Activated CD4-positive, alpha-beta T cell treated with anti-CD3 and anti-CD28 coated beads, Interleukin-2, amount 10 ng/mL, durations not matched to agents 24 days and 14 days (primary cell): ENCODE measurements at regions of chr1 and their contacts with region 1.

Region 1: DNA sequence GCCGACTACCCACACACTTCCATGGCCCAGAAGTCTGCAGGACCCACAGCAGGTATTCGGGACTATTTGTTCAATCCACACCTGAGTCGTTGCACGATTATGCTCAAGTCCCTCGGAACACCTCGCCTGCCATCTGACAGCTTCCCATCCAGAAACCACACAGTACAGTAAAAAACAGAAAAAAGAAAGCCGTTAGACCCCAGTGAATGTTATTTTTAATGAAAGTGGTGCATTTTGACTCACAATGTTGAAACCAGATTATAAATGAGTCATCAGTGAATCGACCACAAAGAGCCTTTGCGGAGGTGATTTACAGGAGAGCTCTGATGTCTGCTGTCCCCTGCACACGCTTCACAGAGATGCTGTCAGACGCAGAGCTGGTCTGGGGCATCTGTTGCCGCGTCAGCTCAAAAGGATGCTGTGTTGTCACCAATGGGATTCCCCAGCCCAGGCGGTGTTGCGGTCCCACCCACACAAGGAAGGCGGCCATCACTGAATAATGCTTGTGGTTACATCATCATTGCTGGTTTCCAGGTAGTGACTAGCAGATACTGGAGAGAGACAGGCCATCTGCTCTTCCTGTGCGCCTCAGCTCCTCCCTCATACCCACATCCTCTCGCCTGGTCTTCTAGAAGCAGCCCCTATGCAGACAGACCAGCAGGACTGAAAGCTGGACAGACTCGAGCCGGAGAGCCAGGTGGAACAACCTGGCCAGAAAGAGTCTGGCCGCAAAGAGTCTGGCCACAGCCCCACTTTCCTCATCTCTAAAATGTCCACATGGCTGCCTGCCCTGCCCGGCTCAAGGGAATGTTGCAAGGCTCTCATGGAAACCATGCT is 116.8 kb downstream of the TOMM20 start:
- DNase-seq: peak; percentile 98
- H3K4me3 Mint-ChIP-seq: peak overlapping the region; percentile 76
- H3K27ac Mint-ChIP-seq: peak overlapping the region; percentile 98
- H3K4me1 Mint-ChIP-seq: peaks cover 79% of the 10 kb centered on the region
- H3K27me3 Mint-ChIP-seq: peaks cover 5% of the 10 kb centered on the region

Region 2: GRCh38 chr1:234499119-234499942 is 512.5 kb before region 1 on chr1:
- intact Hi-C with region 1: loop called (anchors 1 kb)
- DNase-seq: peak; percentile 96
- H3K4me3 Mint-ChIP-seq: peak overlapping the region; percentile 50
- H3K27ac Mint-ChIP-seq: peak overlapping the region; percentile 85
- H3K4me1 Mint-ChIP-seq: peaks cover 70% of the 10 kb centered on the region
- H3K27me3 Mint-ChIP-seq: no peaks in the 10 kb centered on the region

Region 3: DNA sequence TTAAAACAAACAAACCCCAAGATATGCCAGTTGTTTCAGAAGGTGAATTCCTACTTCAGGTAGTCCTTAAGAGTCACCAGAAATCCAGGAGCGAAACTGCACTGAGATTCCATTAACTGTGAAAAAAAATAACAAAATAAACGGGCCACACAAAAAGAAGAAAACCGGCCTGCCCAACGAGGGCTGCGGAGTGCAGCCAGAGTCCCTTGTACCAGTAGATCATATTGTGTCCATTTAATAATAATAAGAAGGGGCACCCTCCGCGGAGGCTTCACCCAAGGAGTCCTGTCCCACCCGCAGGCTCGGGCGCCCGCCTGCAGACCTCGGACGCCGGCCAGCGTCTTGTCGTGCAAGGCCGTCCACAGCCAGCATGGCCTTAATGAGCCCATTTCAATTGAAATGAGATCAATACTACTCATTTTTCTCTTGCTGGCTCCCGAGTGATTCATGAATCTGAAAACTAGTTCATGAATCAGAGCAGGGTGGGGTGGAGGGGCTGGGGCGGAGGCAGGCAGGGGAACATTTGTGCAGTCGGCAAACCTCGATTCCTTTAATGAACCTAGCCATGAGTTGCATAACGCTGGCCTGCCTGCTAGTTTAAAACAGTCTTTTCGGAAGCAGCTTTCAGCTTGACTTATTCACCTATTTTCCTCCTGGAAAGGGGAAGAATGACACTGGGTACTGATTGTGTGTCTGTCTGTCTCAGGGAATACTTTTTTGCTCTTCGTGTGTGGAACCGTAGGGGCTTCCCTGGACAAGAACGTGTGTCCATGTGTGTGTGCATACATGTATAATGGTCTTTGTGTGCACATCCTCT is 288.7 kb before region 1 on chr1:
- intact Hi-C with region 1: loop called (anchors 1 kb)
- DNase-seq: peak; percentile 66
- H3K4me3 Mint-ChIP-seq: peak overlapping the region; percentile 76
- H3K27ac Mint-ChIP-seq: peak overlapping the region; percentile 96
- H3K4me1 Mint-ChIP-seq: peaks cover 82% of the 10 kb centered on the region
- H3K27me3 Mint-ChIP-seq: peaks cover 2% of the 10 kb centered on the region

Region 4: GRCh38 chr1:234842726-234843641 is 168.8 kb before region 1 on chr1:
- intact Hi-C with region 1: loop called (anchors 1 kb)
- DNase-seq: peak; percentile 89
- H3K4me3 Mint-ChIP-seq: peak overlapping the region; percentile 74
- H3K27ac Mint-ChIP-seq: peak overlapping the region; percentile 94
- H3K4me1 Mint-ChIP-seq: peaks cover 84% of the 10 kb centered on the region
- H3K27me3 Mint-ChIP-seq: no peaks in the 10 kb centered on the region

Region 5: DNA sequence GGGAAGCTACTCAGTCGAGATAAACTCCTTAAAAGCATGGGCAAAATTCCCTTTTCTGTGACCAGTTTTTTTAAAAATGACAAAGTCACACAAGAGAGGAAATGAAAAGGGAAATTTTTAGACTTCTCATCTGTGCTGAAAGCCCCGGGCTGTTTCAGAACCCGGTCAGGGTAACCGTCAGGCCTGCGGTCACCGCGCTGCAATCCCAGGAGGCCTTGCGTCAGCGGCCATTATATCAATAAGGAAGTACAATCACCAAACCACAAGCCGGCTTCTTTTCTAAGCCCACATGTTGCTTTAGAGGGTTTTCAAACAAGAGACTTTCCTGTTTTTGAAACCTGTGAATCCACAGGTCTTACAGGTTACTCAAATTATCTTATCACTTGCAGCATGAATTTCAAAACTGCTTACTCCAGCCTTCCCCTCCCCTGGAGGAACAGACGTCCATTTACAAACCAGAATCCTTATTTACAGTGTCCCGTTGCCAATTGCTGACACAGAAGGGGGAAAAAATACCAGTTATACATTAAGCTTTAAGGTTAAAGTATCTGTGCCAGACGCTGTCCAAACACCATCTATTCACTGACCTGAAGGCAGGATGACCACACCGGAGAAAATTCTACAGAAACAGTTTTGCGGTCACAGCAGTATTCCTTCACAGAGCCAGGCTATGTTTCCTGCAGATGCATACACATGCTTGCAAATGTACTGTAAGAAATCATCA is 48.5 kb before region 1 on chr1:
- intact Hi-C with region 1: loop called (anchors 1 kb)
- DNase-seq: peak; percentile 96
- H3K4me3 Mint-ChIP-seq: peak overlapping the region; percentile 79
- H3K27ac Mint-ChIP-seq: peak overlapping the region; percentile 97
- H3K4me1 Mint-ChIP-seq: peaks cover 69% of the 10 kb centered on the region
- H3K27me3 Mint-ChIP-seq: no peaks in the 10 kb centered on the region

Region 6: DNA sequence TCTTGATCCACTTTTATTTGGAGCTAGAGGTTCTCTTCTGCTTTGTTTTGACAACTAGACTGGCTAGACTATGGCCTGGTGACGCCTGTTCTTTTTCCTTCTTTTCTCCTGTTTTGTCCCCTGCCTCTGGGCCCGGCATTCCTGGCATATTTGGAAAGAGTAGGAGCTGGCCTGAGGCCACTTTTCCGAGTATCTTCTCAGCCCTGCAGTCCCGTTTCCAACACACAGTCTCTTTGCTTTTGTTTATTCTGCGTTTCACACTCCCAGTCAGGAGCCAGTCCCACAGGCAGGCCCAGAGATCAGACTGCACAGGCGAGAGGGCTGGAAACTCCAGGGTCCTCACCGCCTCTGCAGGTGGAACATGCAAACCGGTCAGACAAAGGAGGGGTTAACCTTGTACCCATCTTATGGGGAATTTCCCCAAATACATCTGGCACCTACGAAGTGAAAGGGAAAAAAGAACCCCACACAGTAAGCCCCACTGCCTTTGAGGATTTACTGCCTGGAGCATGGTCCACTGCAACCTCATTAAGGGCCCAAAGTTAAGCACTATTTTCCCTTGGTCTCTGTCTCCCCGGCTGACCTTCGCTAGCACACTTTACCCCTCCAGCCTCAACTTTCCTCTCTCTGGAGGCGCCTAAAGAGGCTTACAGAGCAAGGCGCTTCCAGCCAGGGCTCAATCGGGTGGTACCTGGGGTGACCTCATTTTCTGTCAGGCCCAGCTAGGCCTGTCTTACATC is 24.2 kb before region 1 on chr1:
- intact Hi-C with region 1: loop called (anchors 1 kb)
- DNase-seq: peak; percentile 73
- H3K4me3 Mint-ChIP-seq: peak overlapping the region; percentile 66
- H3K27ac Mint-ChIP-seq: peak overlapping the region; percentile 98
- H3K4me1 Mint-ChIP-seq: peaks cover 71% of the 10 kb centered on the region
- H3K27me3 Mint-ChIP-seq: no peaks in the 10 kb centered on the region

Region 7: DNA sequence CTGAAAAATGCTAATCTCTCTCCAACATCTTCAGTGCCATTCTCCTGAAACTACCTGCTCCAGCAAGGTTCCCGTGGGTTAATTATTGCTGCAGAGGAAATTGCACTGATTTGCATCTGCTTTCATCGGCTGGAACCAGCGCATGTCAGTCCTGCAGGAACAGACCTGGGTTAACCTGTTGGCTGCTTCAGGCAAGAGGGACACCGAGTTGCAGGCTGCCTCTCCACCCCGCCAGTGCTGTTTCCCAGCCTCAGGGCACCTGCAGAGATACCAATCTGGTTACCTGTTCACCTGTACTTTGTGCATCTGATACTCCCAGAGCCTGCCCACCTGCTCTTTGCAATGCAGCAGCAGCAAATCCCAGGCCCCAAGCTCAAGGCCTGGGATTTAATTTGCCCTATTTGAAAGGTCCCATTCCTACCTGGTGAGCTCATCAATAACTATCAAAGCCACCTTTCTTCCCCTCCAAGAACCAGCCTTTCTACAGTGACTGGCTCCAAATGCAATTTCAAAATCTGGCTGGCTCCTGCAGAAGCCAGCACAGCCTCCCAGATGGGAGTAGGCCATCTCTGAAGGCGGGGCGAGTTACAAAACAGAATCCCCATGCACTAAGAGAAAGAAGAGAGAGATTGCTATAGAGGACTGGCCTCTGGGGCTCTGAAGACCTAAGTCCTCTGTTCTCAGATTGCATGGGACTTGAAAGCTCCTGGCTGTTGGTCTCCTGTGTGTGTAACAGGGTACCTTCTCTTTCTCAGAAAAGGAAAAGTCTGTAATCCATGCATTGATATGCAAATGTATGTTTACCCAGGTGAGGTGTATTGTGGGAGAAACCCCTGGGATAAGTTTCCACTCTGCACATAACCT is 49.0 kb after region 1 on chr1:
- intact Hi-C with region 1: no loop called
- DNase-seq: no peak
- H3K4me3 Mint-ChIP-seq: no peak overlapping the region
- H3K27ac Mint-ChIP-seq: no peak overlapping the region
- H3K4me1 Mint-ChIP-seq: peaks cover 40% of the 10 kb centered on the region
- H3K27me3 Mint-ChIP-seq: no peaks in the 10 kb centered on the region

Region 8: DNA sequence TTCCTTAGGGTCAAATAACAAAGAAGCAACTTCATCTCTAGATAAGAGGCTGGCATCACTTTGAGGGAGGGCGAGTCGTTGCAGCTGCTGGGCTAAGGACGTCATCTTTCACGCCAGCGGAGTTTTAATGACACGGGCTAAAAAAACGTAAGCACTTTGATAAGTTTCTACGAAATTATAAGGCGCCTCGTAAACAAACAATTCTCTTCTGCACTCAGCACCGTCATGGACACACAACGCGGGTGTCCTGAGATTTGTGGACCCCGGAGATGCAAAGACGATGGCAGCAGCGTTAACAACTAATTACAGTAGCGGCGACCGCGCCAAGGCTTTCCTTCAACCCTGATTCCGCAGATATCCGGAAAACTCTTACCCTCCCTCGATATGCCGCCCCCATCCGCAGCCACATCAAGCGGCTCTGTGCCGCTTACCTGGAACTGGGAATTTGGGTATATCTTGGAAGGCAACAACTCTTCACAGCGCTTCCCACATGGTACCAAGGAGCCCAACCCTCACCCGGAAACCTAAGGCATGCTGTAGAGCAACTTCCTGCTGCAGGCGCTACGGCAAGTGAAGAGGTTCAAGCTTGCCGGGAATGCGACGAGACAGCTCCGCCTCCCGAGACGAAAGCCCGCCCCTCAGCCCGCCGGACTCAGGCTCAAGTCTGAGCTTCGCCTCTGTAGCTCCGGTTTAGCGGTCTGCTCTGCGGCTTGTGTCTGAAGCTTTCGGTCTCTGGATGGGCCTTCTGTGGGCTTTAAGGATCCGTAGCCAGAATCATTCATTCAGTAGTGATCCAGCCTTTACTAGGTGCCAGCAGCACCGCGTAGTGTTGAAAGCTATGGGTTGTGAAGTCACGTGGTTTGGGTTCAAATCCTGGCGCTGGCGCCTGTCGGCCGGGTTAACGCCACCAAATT is 1592.4 kb after region 1 on chr1 and contains the start of gene HEATR1:
- intact Hi-C with region 1: no loop called
- DNase-seq: peak; percentile 97
- H3K4me3 Mint-ChIP-seq: peak within 1 kb of the TSS; percentile 89
- H3K27ac Mint-ChIP-seq: peak within 1 kb of the TSS; percentile 94
- H3K4me1 Mint-ChIP-seq: peaks cover 24% of the 10 kb centered on the region
- H3K27me3 Mint-ChIP-seq: peaks cover 14% of the 10 kb centered on the region
- total RNA-seq, gene HEATR1: 83.0 and 91.8 TPM in 2 replicates